MCF 10A (cell line): ENCODE measurements at regions of chr19 and their contacts with region 1.

Region 1: GRCh38 chr19:33373701-33374421 is at the start of gene CEBPG:
- DNase-seq: peak; percentile 91
- H3K4me3 Mint-ChIP-seq: peak within 1 kb of the TSS; percentile 89
- H3K27ac Mint-ChIP-seq: peak within 1 kb of the TSS; percentile 94
- H3K4me1 Mint-ChIP-seq: peaks cover 41% of the 10 kb centered on the region
- H3K27me3 Mint-ChIP-seq: no peaks in the 10 kb centered on the region
- CTCF ChIP-seq: no peak
- total RNA-seq, gene CEBPG: 78.5 and 91.3 TPM in 2 replicates

Region 2: DNA sequence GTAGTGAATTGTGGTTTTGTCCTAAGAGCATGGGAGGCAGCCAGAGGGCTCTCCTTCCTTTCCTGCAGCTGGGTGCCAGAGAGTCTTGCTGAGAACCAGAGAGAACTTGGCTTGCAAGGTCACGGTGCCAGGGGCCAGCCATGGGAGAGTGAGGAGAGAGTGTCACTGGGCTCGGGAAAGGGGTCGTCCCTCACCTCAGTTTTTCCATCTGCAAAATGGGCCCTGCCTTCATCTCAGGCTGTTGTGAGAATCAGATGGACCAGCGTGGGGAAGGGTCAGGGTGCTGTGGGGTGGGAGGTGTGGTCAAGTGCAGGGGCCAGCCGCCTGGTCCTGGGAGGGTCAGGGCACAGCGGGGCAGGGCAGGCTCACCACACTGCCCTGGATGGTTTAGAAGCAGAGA is 172.4 kb before region 1 on chr19:
- CTCF ChIA-PET with region 1: no interaction called
- POLR2A ChIA-PET with region 1: no interaction called
- intact Hi-C with region 1: no loop called
- DNase-seq: no peak
- H3K4me3 Mint-ChIP-seq: no peak overlapping the region
- H3K27ac Mint-ChIP-seq: no peak overlapping the region
- H3K4me1 Mint-ChIP-seq: no peaks in the 10 kb centered on the region
- H3K27me3 Mint-ChIP-seq: no peaks in the 10 kb centered on the region
- CTCF ChIP-seq: no peak

Region 3: DNA sequence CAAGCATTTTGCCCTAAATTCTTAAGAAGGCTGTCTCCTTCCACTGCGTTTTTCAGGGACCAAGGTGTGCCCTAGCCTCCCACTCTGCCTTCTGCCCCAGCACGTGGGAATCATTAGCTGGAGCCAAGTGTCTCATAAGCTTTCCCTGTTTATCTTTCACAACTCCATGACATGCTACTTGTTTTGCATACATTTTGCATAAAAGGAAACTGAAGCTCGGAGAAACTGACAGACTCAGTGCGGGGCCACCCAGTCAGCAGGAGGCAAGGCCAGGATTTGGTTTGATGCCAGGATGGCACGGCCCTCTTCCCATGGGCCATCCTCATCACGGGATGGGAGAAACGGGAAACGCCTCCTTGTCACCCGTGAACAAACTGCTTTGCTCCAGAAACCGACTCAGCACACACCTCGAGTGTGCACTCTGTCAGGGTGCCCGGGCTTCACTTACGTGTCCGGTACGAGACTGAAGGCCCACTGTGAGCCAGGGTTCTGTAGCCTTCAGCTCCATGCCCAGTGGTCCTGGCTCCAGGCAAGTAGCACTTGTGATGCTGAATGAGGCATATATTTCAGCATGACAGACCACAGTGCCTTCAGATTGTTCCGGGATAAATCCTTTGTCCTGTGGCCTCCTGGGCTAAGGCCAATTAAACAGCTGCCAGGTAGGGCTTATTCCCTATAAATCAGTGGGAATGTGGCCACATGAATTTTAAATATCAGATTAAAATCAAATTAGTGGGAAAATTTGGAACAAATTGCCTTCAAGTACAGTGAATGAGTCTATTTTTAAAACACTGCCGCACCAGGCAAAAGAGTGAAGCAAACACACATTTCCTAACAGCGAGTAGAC is 81.0 kb before region 1 on chr19:
- CTCF ChIA-PET with region 1: interaction called, 7 read pairs
- POLR2A ChIA-PET with region 1: interaction called, 110 read pairs
- intact Hi-C with region 1: no loop called
- DNase-seq: peak; percentile 87
- H3K4me3 Mint-ChIP-seq: no peak overlapping the region
- H3K27ac Mint-ChIP-seq: peak overlapping the region; percentile 35
- H3K4me1 Mint-ChIP-seq: peaks cover 15% of the 10 kb centered on the region
- H3K27me3 Mint-ChIP-seq: no peaks in the 10 kb centered on the region
- CTCF ChIP-seq: no peak

Region 4: DNA sequence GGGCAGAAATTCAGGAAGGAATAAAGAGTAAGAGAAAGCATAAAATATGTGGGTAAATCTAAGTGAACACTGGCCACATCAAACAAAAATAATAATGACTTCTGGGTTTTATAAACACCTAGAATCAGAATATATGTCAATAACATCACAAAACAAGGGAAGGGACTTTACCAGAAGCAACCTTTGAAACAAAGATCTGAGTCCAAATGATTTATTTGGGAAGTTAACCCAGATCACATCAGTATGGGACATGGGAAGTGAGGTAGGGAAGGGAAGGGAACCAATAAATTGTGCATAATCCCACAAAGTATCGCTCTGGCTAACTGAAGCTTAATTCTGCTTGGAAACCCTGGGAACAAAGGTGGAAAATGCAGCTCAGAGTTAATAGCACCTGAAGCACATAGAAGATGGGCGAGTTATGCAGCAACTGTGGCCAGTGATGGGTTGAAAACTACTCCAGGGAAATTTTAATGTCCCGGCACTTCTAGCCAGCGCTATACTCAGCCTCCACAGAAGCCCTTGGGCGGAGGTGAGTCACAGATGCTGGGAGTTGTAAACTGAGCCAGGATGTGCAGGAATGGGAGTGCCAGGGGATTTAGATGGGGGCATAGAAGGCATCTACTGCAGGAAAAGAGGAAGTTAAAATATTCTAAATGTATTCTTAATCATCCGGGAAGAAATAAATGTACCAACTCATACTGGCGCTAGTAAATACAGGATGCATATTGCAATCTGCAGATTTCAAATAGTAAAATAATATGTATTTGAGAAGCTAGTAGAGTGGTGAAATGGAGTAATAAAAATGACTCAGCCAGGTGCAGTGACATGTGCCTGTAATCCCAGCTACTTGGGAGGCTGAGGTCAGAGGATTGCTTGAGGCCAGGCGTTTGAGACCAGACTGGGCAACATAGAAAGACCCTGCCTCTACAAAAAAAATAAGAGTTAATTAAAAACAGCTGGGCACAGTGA is 34.6 kb before region 1 on chr19:
- CTCF ChIA-PET with region 1: interaction called, 3 read pairs
- POLR2A ChIA-PET with region 1: interaction called, 21 read pairs
- intact Hi-C with region 1: no loop called
- DNase-seq: peak; percentile 92
- H3K4me3 Mint-ChIP-seq: no peak overlapping the region
- H3K27ac Mint-ChIP-seq: peak overlapping the region; percentile 16
- H3K4me1 Mint-ChIP-seq: peaks cover 10% of the 10 kb centered on the region
- H3K27me3 Mint-ChIP-seq: no peaks in the 10 kb centered on the region
- CTCF ChIP-seq: no peak

Region 5: DNA sequence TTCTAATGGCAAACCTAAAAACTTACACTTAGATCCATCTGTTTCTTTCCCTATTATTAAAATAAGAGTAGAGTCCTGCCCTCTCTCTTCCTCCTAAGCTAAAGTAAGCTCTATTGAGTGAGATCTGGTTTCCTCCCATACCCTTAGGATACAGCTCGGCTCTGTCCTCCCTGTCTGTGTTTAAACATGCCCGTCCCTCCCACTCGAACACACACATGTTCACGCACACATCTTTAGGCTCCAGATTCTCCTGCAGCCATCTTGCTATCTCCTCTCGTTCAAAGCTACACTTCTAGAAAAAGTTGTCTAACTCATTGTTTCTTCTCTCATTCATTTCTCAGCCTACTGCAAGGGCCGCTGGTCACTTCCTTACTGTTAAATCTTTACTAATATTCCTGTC is 15.5 kb before region 1 on chr19:
- CTCF ChIA-PET with region 1: interaction called, 6 read pairs
- POLR2A ChIA-PET with region 1: interaction called, 81 read pairs
- intact Hi-C with region 1: no loop called
- DNase-seq: peak; percentile 41
- H3K4me3 Mint-ChIP-seq: no peak overlapping the region
- H3K27ac Mint-ChIP-seq: peak overlapping the region; percentile 63
- H3K4me1 Mint-ChIP-seq: peaks cover 13% of the 10 kb centered on the region
- H3K27me3 Mint-ChIP-seq: no peaks in the 10 kb centered on the region
- CTCF ChIP-seq: no peak

Region 6: GRCh38 chr19:33752018-33752800 is 378.3 kb after region 1 on chr19:
- CTCF ChIA-PET with region 1: no interaction called
- POLR2A ChIA-PET with region 1: no interaction called
- intact Hi-C with region 1: no loop called
- DNase-seq: no peak
- H3K4me3 Mint-ChIP-seq: no peak overlapping the region
- H3K27ac Mint-ChIP-seq: no peak overlapping the region
- H3K4me1 Mint-ChIP-seq: no peaks in the 10 kb centered on the region
- H3K27me3 Mint-ChIP-seq: no peaks in the 10 kb centered on the region
- CTCF ChIP-seq: no peak